ENCODE measurements at regions of chr6 and their contacts with region 1.

Region 1: GRCh38 chr6:47787620-47788497 is 6.0 kb downstream of the OPN5 start:
- DNase-seq: peak; percentile 66
- ATAC-seq: peak; percentile 85
- H3K4me3 Mint-ChIP-seq: no peak overlapping the region
- H3K27ac Mint-ChIP-seq: no peak overlapping the region
- H3K4me1 Mint-ChIP-seq: peaks cover 3% of the 10 kb centered on the region
- H3K27me3 Mint-ChIP-seq: peaks cover 40% of the 10 kb centered on the region

Region 2: DNA sequence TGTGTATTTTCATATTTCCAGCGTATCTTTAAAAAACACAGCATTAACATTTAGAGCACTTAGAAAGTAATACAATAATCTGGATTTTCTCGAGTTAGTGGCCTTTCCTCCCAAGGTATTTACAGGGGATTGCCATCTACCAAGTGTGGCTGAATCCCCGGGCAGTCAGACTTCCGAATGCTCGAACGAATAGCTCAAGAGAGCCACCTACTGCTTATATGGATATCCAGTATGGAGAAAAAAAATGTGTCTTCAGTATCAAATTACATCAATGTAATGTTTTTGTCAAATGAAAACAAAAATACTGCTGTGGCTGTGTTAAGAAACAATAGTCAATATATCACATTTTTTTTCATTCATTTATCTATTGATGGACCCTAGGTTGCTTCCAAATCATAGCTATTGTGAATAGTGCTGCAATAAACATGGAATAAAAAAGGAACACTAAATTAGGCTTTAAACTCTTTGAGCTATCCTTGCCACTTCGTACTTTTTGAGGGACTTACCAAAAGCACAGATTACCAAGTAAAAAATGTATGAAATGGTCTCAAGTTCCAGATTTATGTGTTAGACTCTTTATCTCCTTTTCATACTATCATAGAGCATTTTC is 977.6 kb after region 1 on chr6:
- CTCF ChIA-PET with region 1: interaction called, 13 read pairs
- POLR2A ChIA-PET with region 1: no interaction called
- DNase-seq: no peak
- ATAC-seq: no peak
- H3K4me3 Mint-ChIP-seq: no peak overlapping the region
- H3K27ac Mint-ChIP-seq: no peak overlapping the region
- H3K4me1 Mint-ChIP-seq: no peaks in the 10 kb centered on the region
- H3K27me3 Mint-ChIP-seq: no peaks in the 10 kb centered on the region

Region 3: DNA sequence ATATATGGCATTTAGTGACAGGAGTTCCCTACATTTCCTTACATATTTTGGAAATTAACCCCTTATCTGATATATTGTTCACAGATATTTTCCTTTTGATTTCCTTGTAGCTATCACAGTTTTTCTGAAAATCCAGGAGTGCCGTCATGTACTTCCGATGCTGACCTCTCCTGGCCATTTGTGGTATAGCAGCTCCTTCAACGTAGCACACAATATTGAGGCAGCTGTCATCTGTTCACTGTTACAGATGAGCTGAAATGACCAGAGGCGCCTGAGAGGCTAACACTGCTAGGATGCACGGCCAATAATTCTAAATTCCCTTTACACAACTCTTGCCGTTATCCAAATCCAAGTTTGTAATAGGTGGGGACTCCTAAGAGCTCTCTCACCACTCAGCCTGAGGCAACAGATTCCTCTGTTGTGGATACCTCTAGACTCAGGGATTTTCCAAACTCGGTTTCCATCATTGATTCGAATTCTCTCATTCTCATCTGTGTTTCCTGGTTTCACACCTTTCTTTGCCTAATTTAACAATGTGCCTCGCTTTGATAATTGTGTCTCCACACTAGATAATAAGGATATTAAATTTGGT is 1622.2 kb after region 1 on chr6:
- CTCF ChIA-PET with region 1: interaction called, 33 read pairs
- POLR2A ChIA-PET with region 1: no interaction called
- DNase-seq: peak; percentile 71
- ATAC-seq: peak; percentile 60
- H3K4me3 Mint-ChIP-seq: no peak overlapping the region
- H3K27ac Mint-ChIP-seq: no peak overlapping the region
- H3K4me1 Mint-ChIP-seq: no peaks in the 10 kb centered on the region
- H3K27me3 Mint-ChIP-seq: peaks cover 2% of the 10 kb centered on the region